K562 (cell line): ENCODE measurements at regions of chr6 and their contacts with region 1.

Region 1: GRCh38 chr6:10747251-10747972 is at the start of gene TMEM14B:
- DNase-seq: peak; percentile 99 to 100 (median 100)
- ATAC-seq: peak; percentile 94
- H3K4me3 ChIP-seq: peak within 1 kb of the TSS; percentile 57
- H3K27ac ChIP-seq: peak within 1 kb of the TSS; percentile 75
- H3K4me1 ChIP-seq: peaks cover 28 to 51% of the 10 kb centered on the region in 2 experiments
- H3K27me3 ChIP-seq: no peaks in the 10 kb centered on the region
- CTCF ChIP-seq: no peak
- EP300 ChIP-seq: peak; percentile 33
- POLR2A ChIP-seq: peak; percentile 92
- RAD21 ChIP-seq: no peak; a peak in 1 of 4 replicates
- polyA plus RNA-seq, gene TMEM14B: 777 to 862 TPM

Region 2: DNA sequence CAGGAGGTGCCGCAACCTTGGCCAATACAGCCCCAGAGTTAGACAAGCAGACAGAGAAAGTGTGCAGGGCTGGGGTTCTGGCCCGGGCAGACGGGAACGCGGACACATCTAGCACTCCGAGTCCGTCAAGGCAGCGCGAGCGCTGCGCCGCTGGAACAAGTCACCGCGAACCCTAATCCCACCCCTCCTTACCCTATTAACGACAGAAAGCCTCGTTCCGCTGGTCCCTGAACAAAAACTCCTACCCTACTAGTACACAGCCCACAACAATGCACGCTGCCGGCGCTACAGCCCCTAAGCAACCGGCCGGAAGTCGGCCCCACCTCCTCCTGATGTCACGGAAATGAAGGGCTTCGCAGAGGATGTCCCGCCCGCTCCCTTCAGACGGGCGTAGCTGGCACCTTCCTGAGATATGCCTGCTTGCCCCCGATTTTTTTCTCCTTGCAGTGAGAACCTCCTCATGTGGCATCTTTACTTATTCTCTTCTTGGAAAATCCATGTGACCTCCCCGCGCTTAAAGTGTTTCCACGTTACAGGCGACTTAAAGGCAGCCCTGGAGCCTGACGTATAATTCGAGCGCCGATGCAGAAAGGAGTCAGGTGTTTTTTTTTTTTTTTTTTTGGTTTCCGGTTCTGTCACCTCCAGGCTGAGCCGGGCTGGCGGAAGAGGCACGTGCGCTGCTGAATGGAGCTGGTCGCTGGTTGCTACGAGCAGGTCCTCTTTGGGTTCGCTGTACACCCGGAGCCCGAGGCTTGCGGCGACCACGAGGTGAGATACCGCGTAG is 52.9 kb before region 1 on chr6 and contains the starts of genes C6orf52 and PAK1IP1:
- CTCF ChIA-PET with region 1: no interaction called
- POLR2A ChIA-PET with region 1: interaction called, 4 read pairs
- in situ Hi-C with region 1: no loop called
- intact Hi-C with region 1: loop called (anchors 1 kb)
- DNase-seq: peak; percentile 94 to 97 (median 94)
- ATAC-seq: peak; percentile 98
- H3K4me3 ChIP-seq: peak within 1 kb of the TSS; percentile 55
- H3K27ac ChIP-seq: peak within 1 kb of the TSS; percentile 84
- H3K4me1 ChIP-seq: peaks cover 5 to 13% of the 10 kb centered on the region in 2 experiments; a peak in 4 of 5 replicates
- H3K27me3 ChIP-seq: no peaks in the 10 kb centered on the region
- CTCF ChIP-seq: 0 out of 6 replicates have a peak, but pooled peaks of 1 of the 3 experiments have one; percentile 1
- EP300 ChIP-seq: no peak; the same call in none of the 2 replicates
- POLR2A ChIP-seq: peak; percentile 98
- RAD21 ChIP-seq: peak; percentile 34 to 38; a peak in 3 of 4 replicates
- polyA plus RNA-seq, gene C6orf52: 27.6 to 37.0 TPM
- polyA plus RNA-seq, gene PAK1IP1: 189 to 200 TPM

Region 3: GRCh38 chr6:10713962-10714361 is 33.5 kb before region 1 on chr6:
- CTCF ChIA-PET with region 1: no interaction called
- POLR2A ChIA-PET with region 1: no interaction called
- in situ Hi-C with region 1: no loop called
- intact Hi-C with region 1: loop called (anchors 5 kb)
- DNase-seq: no peak
- ATAC-seq: no peak
- H3K4me3 ChIP-seq: no peak overlapping the region
- H3K27ac ChIP-seq: no peak overlapping the region
- H3K4me1 ChIP-seq: no peaks in the 10 kb centered on the region
- H3K27me3 ChIP-seq: no peaks in the 10 kb centered on the region
- CTCF ChIP-seq: no peak
- EP300 ChIP-seq: no peak
- POLR2A ChIP-seq: no peak
- RAD21 ChIP-seq: no peak

Region 4: DNA sequence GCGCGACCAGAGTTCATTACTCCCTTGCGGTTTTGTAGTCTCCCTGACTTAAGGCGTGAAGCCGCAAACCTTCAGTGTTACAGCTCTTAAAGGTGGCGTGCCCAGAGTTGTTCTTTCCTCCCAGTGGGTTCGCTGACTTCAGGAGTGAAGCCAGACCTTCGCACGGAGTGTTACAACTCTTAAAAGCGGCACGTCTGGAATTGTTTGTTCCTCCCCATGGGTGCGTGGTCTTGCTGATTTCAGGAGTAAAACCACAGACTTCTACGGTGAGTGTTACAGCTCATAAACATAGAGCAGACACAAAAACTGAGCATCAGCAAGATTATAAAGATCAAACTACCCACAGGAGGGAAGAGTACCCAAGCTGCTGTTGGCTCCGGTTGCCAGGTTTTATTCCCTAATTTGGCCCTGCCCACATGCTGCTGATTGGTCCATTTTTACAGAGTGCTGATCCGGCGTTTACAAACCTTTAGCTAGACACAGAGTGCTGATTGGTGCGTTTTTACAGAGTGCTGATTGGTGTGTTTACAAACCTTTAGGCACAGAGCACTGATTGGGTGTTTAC is 14.2 kb before region 1 on chr6:
- CTCF ChIA-PET with region 1: no interaction called
- POLR2A ChIA-PET with region 1: interaction called, 13 read pairs
- in situ Hi-C with region 1: no loop called
- intact Hi-C with region 1: no loop called
- DNase-seq: no peak
- ATAC-seq: peak; percentile 55
- H3K4me3 ChIP-seq: no peak overlapping the region
- H3K27ac ChIP-seq: no peak overlapping the region
- H3K4me1 ChIP-seq: no peaks in the 10 kb centered on the region
- H3K27me3 ChIP-seq: no peaks in the 10 kb centered on the region
- CTCF ChIP-seq: no peak
- EP300 ChIP-seq: no peak
- POLR2A ChIP-seq: no peak
- RAD21 ChIP-seq: no peak

Region 5: GRCh38 chr6:10771371-10771894 is 24.0 kb after region 1 on chr6:
- CTCF ChIA-PET with region 1: no interaction called
- POLR2A ChIA-PET with region 1: interaction called, 10 read pairs
- in situ Hi-C with region 1: no loop called
- intact Hi-C with region 1: loop called (anchors 1 kb)
- DNase-seq: peak; percentile 47 to 94 (median 70)
- ATAC-seq: peak; percentile 99
- H3K4me3 ChIP-seq: no peak overlapping the region; the same call in 1 of the 2 replicates
- H3K27ac ChIP-seq: peak overlapping the region; percentile 5; the same call in 2 of the 3 replicates
- H3K4me1 ChIP-seq: peaks cover 10 to 18% of the 10 kb centered on the region in 2 experiments; a peak in 4 of 5 replicates
- H3K27me3 ChIP-seq: no peaks in the 10 kb centered on the region
- CTCF ChIP-seq: peak; percentile 33 to 49 (median 36); a peak in 5 of 6 replicates
- EP300 ChIP-seq: peak; percentile 97
- POLR2A ChIP-seq: no peak
- RAD21 ChIP-seq: peak in 1 of 2 experiments; percentile 37; a peak in 3 of 4 replicates